A673 (cell line): ENCODE measurements at regions of chr3 and their contacts with region 1.

Region 1: GRCh38 chr3:138332472-138333076 is 2.9 kb upstream of the NME9 start:
- DNase-seq: peak; percentile 44
- H3K4me3 ChIP-seq: no peak overlapping the region
- H3K27ac ChIP-seq: no peak overlapping the region
- H3K4me1 ChIP-seq: peaks cover 6% of the 10 kb centered on the region
- H3K27me3 ChIP-seq: peaks cover 10% of the 10 kb centered on the region
- CTCF ChIP-seq: peak; percentile 59

Region 2: GRCh38 chr3:138426226-138426625 is 93.7 kb after region 1 on chr3:
- CTCF ChIA-PET with region 1: no interaction called
- POLR2A ChIA-PET with region 1: no interaction called
- intact Hi-C with region 1: loop called (anchors 2 kb)
- DNase-seq: no peak
- H3K4me3 ChIP-seq: no peak overlapping the region
- H3K27ac ChIP-seq: no peak overlapping the region
- H3K4me1 ChIP-seq: no peaks in the 10 kb centered on the region
- H3K27me3 ChIP-seq: no peaks in the 10 kb centered on the region
- CTCF ChIP-seq: peak; percentile 43

Region 3: DNA sequence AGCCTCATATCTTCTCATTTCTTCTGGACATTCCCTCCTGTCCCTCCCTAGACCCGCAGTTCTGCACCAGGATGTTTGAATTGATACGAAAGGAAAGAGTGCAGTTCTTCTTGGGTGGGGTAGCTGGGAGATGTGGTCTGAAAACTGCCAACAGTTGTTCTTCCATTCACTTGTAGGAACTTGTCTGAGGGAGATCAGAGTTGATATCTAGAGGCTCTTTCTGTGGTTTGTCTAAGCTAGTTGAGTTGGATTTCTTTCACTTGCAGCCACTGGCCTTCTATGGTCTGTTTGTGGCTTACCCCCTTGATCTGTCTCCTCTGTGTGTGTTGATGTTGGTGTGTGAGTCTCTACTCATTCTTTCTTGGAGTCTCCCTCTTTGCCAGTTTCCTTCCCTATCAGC is 544.7 kb after region 1 on chr3:
- CTCF ChIA-PET with region 1: no interaction called
- POLR2A ChIA-PET with region 1: no interaction called
- intact Hi-C with region 1: no loop called
- DNase-seq: no peak
- H3K4me3 ChIP-seq: no peak overlapping the region
- H3K27ac ChIP-seq: no peak overlapping the region
- H3K4me1 ChIP-seq: no peaks in the 10 kb centered on the region
- H3K27me3 ChIP-seq: no peaks in the 10 kb centered on the region
- CTCF ChIP-seq: no peak